Esophagus muscularis mucosa (tissue), 4 donors: ENCODE measurements at regions of chr7 and their contacts with region 1.

Region 1: DNA sequence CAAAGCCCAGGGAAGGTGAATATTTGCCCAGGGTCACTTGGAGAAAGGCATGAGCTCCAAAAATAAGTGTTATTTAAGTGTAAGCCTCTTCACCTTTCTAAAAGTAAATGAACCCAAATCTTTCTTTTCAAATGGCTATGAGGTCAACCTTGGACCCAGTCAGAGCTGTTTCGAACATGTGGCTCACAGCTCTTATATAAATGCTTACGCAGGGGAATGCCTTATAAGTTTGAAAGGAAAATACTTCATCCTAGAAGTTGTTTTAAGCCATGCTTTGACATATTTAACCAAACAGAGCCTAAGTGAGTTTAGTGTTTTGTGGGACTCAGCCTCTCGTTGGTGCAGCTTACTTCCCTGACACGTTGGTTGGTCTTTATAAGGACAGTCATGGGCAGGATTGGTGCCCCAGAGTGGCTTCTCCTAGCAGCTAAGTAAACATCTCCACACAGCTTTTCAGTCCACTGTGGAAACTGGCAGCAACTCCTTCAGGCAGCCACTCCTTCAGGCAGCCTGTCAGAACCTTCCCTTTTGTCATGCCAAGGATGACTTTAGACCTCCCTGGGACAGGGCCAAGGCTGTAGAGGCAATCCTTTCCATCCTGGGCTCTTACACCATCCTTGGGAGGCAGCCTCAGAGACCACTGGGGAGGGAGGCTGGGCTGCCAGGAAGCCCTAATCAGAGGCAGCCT is 43.6 kb downstream of the MINDY4 start:
- DNase-seq: peak; percentile 92
- H3K4me3 ChIP-seq: no peak overlapping the region
- H3K27ac ChIP-seq: peak overlapping the region; percentile 84 to 92 (median 90)
- H3K4me1 ChIP-seq: peaks cover 48 to 67% (median 64%) of the 10 kb centered on the region in 4 donors
- H3K27me3 ChIP-seq: no peaks in the 10 kb centered on the region
- CTCF ChIP-seq: no peak
- EP300 ChIP-seq: no peak
- POLR2A ChIP-seq: no peak

Region 2: DNA sequence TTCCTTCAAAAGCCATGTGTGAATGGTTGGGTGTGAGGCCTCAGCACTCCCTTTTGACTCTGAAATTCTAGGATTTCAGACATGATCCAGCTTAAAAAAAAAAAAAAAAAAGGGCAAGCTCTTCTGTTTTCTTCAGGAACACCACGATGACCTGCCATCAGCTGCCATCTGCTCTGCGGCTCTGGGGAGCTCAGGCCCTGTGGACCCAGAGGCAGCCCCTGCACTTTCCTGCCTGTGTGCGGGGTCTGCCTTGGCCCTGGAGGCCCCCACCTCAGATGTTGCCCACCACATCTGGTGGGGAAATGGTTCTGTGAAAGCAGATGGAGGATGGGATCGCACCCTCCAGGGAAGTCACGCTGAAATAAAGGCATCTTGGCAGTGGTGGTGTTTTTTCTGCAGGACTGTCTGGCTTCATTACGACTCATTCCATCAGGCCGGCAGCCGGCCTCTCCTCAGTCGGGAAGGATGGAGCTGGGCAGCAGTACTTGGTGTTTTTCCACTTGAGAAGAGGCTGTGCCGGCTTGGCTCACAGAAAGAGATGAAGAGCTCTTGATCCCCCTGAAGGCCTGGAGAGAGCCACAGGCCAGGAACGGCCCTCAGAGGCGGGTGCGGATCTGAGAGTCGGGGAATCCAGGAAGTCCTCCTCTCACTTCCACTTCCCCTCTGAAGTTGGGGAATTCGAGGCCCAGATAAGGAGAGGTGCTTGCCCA is 30.7 kb after region 1 on chr7:
- intact Hi-C with region 1: loop called (anchors 5 kb)
- DNase-seq: no peak
- H3K4me3 ChIP-seq: no peak overlapping the region
- H3K27ac ChIP-seq: peak overlapping the region; percentile 88 to 95 (median 90)
- H3K4me1 ChIP-seq: peaks cover 50 to 97% (median 92%) of the 10 kb centered on the region in 4 donors
- H3K27me3 ChIP-seq: no peaks in the 10 kb centered on the region
- CTCF ChIP-seq: no peak
- EP300 ChIP-seq: no peak
- POLR2A ChIP-seq: no peak

Region 3: DNA sequence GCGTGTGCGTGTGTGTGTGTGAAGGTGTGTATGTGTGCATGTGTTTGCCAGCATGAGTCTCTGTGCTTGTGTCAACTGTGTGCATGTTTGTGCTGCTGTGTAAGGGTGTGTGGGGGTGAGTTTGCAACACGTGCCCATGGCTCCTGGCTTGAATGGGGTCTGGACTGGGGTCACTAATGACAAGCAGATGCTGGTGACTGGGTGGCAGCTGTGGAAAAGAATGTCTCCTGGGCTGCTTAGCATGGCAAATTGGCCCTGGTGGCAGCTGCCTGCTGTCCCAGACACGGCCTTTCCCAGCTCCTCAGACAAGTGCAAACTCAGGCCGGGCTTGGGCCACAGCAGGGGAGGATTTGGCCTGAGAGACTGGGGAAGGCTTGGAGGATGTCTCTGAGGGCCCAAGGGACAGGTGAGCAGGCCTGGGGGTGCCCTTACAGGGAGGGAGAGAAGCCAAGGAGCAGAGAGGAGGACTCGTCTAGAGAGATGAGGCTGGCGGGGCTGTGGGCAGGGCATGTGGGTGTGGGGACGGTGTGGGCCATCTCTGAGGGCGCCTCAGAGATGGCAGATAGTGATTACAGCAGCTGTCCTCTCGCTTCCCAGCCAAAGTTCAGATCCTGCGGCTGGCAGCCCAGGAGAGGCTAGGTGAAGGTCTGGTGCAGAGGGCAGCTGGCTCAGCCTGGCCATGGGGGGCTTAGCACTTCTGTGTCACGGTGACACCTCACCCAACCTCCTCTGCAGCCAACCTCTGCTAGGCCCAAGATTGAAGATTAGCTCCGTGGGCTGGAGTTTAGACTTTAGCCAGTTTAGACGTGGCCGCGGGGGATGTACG is 98.4 kb after region 1 on chr7:
- intact Hi-C with region 1: loop called (anchors 2 kb)
- DNase-seq: no peak
- H3K4me3 ChIP-seq: peak overlapping the region; percentile 56 to 65 (median 61)
- H3K27ac ChIP-seq: peak overlapping the region; percentile 84 to 90 (median 88)
- H3K4me1 ChIP-seq: peaks cover 85 to 100% (median 99%) of the 10 kb centered on the region in 4 donors
- H3K27me3 ChIP-seq: no peaks in the 10 kb centered on the region
- CTCF ChIP-seq: no peak
- EP300 ChIP-seq: no peak
- POLR2A ChIP-seq: no peak